Prostate gland (tissue), 2 donors: ENCODE measurements at regions of chr19 and their contacts with region 1.

Region 1: DNA sequence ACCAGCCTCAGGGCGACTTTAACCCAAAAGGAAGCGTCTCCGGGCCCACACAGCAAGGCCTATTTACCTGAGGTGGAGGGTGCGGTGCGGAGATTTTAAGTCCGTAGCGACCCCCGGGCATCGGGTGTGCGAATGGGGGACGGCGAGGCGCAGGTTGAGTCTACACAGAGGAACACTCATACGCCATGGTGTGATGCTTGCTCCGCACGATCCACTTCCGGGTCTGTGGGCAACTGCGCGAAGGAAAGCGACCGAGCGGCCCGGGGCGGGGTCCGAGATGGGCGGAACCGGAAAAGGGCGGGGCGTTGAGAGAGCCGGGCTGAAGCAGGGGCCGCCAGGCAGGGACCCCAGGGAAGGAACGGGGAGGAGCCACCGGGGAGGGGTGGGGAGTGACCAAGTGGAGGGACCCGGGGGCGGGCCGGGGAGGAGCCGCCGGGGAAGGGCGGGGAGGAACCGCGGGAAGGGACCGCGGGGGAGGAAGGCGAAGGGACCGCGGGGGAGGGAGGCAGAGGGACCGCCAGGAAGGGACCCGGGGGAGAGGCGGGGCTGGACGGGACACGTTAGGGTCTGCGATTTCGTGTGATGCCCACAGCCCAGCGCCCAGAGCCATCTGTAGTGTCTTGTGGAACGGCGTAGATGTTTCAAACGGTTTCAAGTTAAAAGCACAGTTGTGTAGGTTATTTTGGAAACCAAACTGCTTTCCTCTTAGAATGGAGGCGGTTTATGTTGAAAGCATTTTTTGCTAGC is at the start of gene ZNF160:
- DNase-seq: peak; percentile 98
- H3K4me3 ChIP-seq: peak within 1 kb of the TSS; percentile 73 to 77
- H3K27ac ChIP-seq: peak within 1 kb of the TSS; percentile 83 to 85
- H3K4me1 ChIP-seq: peaks cover 6% of the 10 kb centered on the region
- H3K27me3 ChIP-seq: no peaks in the 10 kb centered on the region
- CTCF ChIP-seq: no peak
- POLR2A ChIP-seq: peak; percentile 91
- total RNA-seq, gene ZNF160: 26.0 to 93.4 TPM

Region 2: DNA sequence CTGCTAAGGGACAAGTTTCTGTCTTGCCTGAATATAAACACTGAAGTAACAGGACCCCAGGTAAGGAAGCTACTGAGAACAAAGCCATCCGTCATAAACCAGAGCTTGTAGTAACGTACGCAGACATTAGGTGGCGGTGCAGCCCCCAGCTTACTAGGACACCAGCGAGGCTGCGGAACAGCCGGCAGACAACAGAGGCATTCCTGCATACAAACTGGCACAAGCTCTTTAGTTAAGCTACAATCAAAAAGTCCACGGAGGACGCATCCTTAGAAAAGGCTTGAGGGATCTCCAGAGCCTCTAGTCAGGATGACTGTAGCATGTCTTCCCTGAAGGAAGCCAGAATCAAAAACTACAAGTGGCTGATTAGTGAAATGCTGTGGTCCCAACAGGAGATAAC is 26.4 kb before region 1 on chr19:
- intact Hi-C with region 1: no loop called
- DNase-seq: peak; percentile 19
- H3K4me3 ChIP-seq: no peak overlapping the region
- H3K27ac ChIP-seq: no peak overlapping the region
- H3K4me1 ChIP-seq: no peaks in the 10 kb centered on the region
- H3K27me3 ChIP-seq: no peaks in the 10 kb centered on the region
- CTCF ChIP-seq: peak in 3 of 4 experiments; percentile 32 to 55 (median 53)
- POLR2A ChIP-seq: no peak

Region 3: GRCh38 chr19:53132141-53132991 is 29.0 kb after region 1 on chr19 and contains the start of gene ZNF415:
- intact Hi-C with region 1: loop called (anchors 2 kb)
- DNase-seq: peak; percentile 88
- H3K4me3 ChIP-seq: peak within 1 kb of the TSS; percentile 60 to 70
- H3K27ac ChIP-seq: peak within 1 kb of the TSS; percentile 74 to 76
- H3K4me1 ChIP-seq: peaks cover 4% of the 10 kb centered on the region
- H3K27me3 ChIP-seq: no peaks in the 10 kb centered on the region
- CTCF ChIP-seq: no peak
- POLR2A ChIP-seq: peak; percentile 35
- total RNA-seq, gene ZNF415: 13.7 to 22.8 TPM

Region 4: GRCh38 chr19:53158119-53158656 is 54.8 kb after region 1 on chr19:
- intact Hi-C with region 1: loop called (anchors 10 kb)
- DNase-seq: peak; percentile 20
- H3K4me3 ChIP-seq: peak overlapping the region; percentile 54 to 59
- H3K27ac ChIP-seq: peak overlapping the region; percentile 73 to 74
- H3K4me1 ChIP-seq: no peaks in the 10 kb centered on the region
- H3K27me3 ChIP-seq: no peaks in the 10 kb centered on the region
- CTCF ChIP-seq: no peak
- POLR2A ChIP-seq: no peak

Region 5: DNA sequence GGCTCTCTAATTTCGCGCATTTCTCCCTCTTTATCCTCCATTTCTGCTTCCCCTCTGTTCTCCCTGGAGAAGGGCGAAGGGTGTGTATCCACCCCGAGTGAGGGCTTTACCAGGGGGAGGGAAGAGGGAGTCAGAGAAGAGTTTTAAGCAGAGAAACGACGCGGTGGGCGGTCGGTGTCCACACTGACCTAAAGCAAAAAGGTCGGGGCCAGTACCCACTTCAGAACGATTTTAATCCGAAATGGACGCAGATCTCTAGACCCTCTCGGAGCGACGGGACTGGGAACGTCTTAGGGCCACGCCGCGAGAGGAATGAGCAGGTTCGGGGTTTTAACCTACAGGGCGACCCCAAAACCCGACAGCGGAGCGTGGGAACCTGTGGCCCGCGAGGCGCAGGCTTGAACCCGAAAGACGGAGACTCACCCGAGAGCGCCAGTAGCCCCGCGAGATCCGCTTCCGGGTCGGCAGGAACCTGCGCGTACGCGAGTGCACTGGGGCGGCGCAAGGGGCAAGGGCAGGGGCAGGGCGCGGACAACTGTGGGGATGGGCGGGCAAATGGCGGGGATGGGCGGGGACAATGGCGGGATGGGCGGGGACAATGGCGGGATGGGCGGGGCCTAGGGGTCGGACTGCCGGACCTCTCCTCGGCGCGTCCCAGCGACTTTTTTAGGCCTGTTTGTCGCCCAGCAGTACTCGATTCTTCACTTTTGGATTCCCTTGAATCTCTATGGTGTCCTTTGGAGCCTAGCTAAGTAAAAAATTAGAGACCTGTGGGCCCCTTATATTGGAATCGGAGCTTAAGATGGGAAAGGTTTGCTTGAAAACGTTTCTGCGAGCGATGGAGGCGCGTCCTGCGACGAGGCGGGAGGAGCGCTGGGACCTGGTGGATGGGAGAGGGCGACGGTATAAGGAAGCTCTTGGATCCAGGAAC is 151.3 kb after region 1 on chr19 and contains the start of gene ZNF677:
- intact Hi-C with region 1: no loop called
- DNase-seq: peak; percentile 85
- H3K4me3 ChIP-seq: peak within 1 kb of the TSS; percentile 65 to 76
- H3K27ac ChIP-seq: peak within 1 kb of the TSS; percentile 81
- H3K4me1 ChIP-seq: no peaks in the 10 kb centered on the region
- H3K27me3 ChIP-seq: no peaks in the 10 kb centered on the region
- CTCF ChIP-seq: no peak
- POLR2A ChIP-seq: peak; percentile 22
- total RNA-seq, gene ZNF677: 28.1 to 35.8 TPM